ENCODE measurements at regions of chr1 and their contacts with region 1.

Region 1: DNA sequence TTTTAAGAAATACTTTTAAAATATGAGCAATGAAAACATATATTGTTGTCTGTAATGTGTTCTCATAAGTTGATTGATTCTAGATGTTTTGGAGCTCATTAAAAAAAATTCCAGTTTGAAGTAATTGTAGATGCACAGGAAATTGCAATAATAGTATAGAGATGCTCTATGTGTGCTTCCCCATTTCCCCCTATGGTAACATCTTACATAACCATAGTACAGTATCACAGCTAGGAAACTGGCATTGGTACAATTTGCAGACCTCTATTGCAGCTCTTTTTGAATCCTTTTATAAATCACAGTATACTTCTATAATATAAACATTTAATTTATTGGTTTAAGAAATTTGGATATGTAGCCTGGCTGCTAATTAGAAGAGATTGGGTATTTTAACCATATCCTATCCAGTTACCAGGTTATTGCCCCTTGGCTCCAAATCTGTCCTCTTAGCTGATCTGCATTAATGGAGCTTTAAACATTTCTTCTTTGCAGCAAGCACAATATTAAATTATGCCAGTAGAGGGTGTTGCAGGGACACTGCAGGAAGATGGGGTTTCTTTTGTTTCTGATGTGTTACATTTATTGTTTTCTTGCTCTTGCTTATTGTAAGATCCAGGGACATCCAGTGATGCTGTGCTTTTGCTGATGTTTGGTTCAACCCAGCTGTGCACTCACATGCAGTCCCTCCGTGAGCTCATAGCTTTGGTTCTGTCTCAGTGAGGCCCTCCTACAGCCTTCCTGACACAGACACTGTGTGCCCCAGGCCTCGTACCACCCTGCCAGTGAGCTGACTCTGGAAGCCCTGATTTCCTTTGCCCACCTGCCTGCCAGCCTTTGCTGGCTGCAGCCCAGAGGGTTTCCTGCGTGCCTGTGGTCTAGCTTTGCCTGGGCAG is 103.3 kb downstream of the RABGAP1L start:
- DNase-seq: no peak
- H3K4me3 ChIP-seq: no peak overlapping the region
- H3K27ac ChIP-seq: no peak overlapping the region
- H3K4me1 ChIP-seq: no peaks in the 10 kb centered on the region
- H3K27me3 ChIP-seq: no peaks in the 10 kb centered on the region
- CTCF ChIP-seq: peak; percentile 25 to 42 (median 35)
- EP300 ChIP-seq: no peak
- POLR2A ChIP-seq: no peak

Region 2: DNA sequence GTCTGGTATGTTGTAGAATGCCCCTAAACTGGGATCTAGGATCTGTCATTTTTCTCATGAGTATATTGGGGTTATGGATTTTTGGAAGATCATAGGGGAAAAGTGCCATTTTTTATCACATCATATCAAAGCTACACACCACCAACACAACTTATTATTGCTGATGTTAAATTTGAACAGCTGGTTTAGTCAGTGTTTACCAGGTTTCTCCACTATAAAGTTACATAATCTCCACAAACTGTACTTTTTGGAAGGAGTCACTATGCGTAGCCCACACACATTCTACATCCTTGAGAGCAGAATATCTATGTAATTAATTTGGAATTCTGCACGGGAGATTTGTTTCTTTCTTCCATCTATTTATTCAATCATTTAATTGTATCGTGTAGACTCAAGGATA is 275.6 kb before region 1 on chr1:
- intact Hi-C with region 1: no loop called
- DNase-seq: no peak
- H3K4me3 ChIP-seq: no peak overlapping the region
- H3K27ac ChIP-seq: no peak overlapping the region
- H3K4me1 ChIP-seq: no peaks in the 10 kb centered on the region
- H3K27me3 ChIP-seq: no peaks in the 10 kb centered on the region
- CTCF ChIP-seq: no peak
- EP300 ChIP-seq: no peak
- POLR2A ChIP-seq: no peak

Region 3: DNA sequence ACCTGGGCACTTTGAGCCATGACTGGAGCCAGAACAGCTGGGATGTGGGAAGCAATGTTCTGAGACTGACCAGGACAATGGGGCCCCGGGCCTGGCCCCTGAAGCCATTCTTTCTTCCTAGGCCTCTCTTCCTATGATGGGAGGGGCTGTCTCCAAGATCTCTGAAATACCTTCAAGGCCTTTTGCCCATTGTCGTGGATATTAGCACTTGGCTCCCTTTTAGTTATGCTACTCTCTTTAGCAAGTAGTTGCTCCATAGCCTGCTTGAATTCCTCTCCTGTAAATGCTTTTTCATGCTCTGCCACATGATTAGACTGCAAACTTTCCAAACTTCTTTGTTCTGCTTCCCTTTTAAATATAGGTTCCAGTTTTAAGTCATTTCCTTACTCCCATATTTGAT is 474.2 kb after region 1 on chr1:
- intact Hi-C with region 1: loop called in 3 of 4 experiments (anchors 2 to 10 kb)
- DNase-seq: no peak
- H3K4me3 ChIP-seq: no peak overlapping the region
- H3K27ac ChIP-seq: no peak overlapping the region
- H3K4me1 ChIP-seq: no peaks in the 10 kb centered on the region
- H3K27me3 ChIP-seq: no peaks in the 10 kb centered on the region
- CTCF ChIP-seq: no peak
- EP300 ChIP-seq: no peak
- POLR2A ChIP-seq: no peak

Measured in ovary (tissue), 10 donors.